Heart left ventricle (tissue), 16 donors: ENCODE measurements at regions of chr1 and their contacts with region 1.

Region 1: DNA sequence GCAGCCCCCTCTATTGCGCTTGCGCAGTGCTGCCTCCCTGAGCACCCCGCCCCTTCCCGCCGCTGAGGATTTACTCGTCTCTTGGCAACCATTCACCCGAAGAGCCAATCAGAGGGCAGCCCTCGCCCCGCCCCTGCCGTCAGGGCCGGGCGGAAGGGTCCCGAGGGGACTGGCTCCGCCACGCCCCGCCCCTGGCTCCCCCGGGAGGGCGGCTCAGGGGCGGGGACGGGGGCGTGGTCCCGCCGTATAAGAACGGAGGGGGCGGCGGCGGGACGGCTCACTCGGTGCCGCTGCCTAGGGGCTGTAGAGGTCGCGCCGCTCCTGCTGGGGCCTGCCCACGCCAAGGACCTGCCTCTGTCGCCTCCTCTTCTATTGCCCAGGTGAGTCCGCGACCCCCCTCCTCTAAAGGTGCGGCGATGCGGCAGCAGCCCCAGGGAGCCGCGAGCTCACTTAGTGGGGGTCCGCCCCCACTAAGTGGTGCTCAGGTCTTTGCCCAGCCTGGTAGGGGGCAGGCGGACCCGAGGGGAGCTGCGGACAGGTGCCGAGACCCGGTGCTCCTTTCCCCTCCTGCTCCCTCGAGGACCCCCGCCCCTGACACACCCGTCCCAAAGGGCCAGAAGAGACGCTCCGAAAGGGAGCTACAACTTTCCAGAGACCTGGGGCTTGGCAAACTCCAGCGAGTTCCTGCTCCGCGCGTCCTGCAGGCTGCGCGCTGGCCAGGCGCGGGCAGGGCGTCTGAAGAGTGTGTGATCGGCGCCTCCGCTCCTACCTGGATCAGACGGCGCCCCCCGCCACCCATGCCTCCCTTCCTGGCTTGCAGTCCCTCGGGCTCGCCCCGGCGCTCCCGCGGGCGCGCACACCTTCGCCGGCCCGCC is at the start of gene TENT5C:
- DNase-seq: peak; percentile 97 to 99 (median 98)
- ATAC-seq: peak; percentile 97 to 98 (median 98)
- H3K4me3 ChIP-seq: peak within 1 kb of the TSS; percentile 60 to 90 (median 78)
- H3K27ac ChIP-seq: peak within 1 kb of the TSS in 11 of 12 donors; percentile 75 to 86 (median 79)
- H3K4me1 ChIP-seq: peaks cover 0 to 47% (median 28%) of the 10 kb centered on the region in 12 donors
- H3K27me3 ChIP-seq: no peaks in the 10 kb centered on the region
- CTCF ChIP-seq: peak in 4 of 12 donors; percentile 3 to 15 (median 6)
- POLR2A ChIP-seq: peak; percentile 51 to 97
- total RNA-seq, gene TENT5C: 7.9 to 21.6 (median 15.1) TPM

Region 2: DNA sequence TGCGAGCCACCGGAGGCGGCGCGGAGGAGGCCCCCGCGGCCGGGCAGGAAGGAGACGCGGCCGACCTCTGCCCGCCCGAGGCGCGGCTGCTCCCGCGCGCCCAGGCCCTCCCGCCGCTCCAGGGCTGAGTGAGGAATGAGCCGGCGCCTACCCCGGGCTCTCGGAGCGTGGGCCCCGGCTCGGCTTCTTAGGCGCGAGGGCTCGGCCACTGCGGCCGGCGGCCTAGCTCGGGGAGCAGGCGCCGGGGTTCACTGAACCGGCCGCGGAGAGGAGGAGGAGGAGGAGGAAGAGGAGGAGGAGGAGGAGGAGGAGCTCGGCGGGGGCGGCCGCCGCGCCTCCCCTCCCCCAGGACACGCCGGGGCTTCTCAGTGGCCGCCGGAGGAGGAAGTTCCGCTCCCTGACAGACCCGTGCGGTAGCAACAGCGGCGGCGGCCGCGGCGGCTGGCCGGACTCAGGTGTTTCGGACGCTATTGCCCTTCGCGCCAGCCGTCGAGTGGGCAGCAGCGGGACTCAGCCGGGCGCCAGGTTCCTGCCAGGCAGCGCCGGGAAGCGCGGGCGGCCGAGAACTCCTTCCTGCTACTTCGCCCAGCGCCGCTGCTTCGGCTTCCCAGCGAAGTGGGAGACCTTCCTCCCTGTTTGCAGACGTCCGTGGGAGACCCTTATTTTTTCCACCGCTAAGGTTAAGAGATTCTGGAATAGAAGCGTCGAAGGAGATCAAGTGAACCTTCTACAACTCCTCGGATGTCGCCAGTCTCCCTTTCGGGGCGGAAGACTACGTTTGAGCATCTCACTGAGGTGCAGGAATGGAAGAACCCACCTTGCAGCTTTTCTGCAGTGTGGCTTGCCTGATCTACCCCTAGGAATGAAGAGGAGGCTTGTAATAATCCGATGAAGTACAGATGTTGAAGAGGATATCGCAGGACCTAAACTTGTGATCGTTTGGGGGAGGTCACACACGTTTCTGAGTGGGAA is 238.7 kb before region 1 on chr1 and contains the start of gene MAN1A2:
- intact Hi-C with region 1: loop called in 2 of 10 experiments (anchors 5 kb)
- DNase-seq: peak; percentile 92 to 95 (median 93)
- ATAC-seq: peak; percentile 92 to 97 (median 96)
- H3K4me3 ChIP-seq: peak within 1 kb of the TSS; percentile 73 to 94 (median 88)
- H3K27ac ChIP-seq: peak within 1 kb of the TSS; percentile 90 to 99 (median 99)
- H3K4me1 ChIP-seq: peaks cover 4 to 60% (median 36%) of the 10 kb centered on the region in 12 donors
- H3K27me3 ChIP-seq: no peaks in the 10 kb centered on the region
- CTCF ChIP-seq: no peak
- POLR2A ChIP-seq: peak in 1 of 2 donors; percentile 81
- total RNA-seq, gene MAN1A2: 15.8 to 36.5 (median 23.9) TPM

Region 3: DNA sequence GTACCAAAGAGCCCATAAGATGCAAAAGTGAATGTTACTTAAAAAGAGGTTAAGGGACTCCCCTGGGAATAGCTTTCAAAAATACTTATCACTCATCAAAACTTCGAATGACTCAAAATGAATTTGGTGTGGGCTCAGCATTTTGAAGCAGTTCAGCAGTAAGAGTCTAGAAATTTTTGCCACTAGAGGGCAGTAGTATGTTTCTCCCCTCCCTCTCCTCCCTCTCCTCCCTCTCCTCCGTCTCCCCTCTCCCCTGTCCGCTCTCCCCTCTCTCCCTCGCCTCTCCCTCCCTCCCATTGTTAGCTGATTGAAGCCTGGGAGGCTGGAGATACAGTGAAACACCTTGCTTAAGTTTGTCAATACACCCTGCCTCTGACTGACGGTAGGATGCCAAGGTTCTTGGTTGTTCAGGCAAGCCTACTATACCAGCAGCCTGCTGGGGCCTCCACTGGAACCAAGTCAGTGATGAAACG is 71.0 kb before region 1 on chr1:
- intact Hi-C with region 1: loop called in 3 of 10 experiments (anchors 5 to 10 kb)
- DNase-seq: peak in 2 of 5 donors; percentile 22 to 33
- ATAC-seq: peak; percentile 70 to 91 (median 88)
- H3K4me3 ChIP-seq: no peak overlapping the region
- H3K27ac ChIP-seq: no peak overlapping the region
- H3K4me1 ChIP-seq: no peaks in the 10 kb centered on the region
- H3K27me3 ChIP-seq: no peaks in the 10 kb centered on the region
- CTCF ChIP-seq: peak; percentile 49 to 74 (median 64)
- POLR2A ChIP-seq: no peak

Region 4: DNA sequence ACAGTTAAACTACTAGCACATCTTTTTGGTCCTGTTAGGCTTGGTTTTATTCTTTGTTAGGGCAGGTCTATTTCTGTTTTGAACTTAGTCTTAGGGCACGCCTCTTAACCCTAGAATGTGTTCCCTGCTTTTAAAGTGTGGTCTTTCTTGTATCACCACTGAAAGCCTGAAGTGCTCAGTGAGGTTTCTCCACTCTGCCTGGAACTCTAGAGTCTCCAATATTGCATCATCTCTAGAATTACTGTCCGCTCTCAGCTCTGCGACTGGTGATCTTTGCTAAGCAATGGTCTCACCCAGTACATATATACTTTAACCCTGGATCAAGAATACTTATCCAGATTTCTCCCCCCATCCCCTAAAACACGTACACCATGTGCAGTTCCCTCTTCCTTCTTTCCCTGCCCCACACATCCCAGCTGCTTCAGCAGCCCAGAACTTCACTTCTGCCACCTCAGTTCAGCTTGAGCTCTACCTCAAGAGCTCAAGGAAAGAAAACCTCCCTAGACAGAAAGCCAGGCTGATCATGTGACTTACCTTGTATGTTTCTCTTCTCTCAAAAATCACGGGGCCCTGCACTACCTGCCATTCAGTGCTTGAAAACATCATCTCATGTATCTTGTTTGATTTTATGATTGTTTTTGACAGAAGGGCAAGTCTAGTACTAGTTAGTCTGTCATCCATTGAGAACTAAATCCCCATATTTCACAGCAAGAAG is 59.7 kb after region 1 on chr1:
- intact Hi-C with region 1: loop called in 4 of 10 experiments (anchors 5 kb)
- DNase-seq: no peak
- ATAC-seq: no peak
- H3K4me3 ChIP-seq: no peak overlapping the region
- H3K27ac ChIP-seq: peak overlapping the region in 1 of 12 donors; percentile 19
- H3K4me1 ChIP-seq: peaks cover 0 to 15% (median 2%) of the 10 kb centered on the region in 12 donors
- H3K27me3 ChIP-seq: no peaks in the 10 kb centered on the region
- CTCF ChIP-seq: no peak
- POLR2A ChIP-seq: no peak

Region 5: GRCh38 chr1:117674521-117675397 is 68.7 kb after region 1 on chr1:
- intact Hi-C with region 1: loop called in 7 of 10 experiments (anchors 2 to 5 kb)
- DNase-seq: no peak
- ATAC-seq: no peak
- H3K4me3 ChIP-seq: no peak overlapping the region
- H3K27ac ChIP-seq: peak overlapping the region in 6 of 12 donors; percentile 63 to 90 (median 84)
- H3K4me1 ChIP-seq: peaks cover 4 to 79% (median 28%) of the 10 kb centered on the region in 12 donors
- H3K27me3 ChIP-seq: no peaks in the 10 kb centered on the region
- CTCF ChIP-seq: peak in 6 of 12 donors; percentile 16 to 35 (median 24)
- POLR2A ChIP-seq: no peak

Region 6: DNA sequence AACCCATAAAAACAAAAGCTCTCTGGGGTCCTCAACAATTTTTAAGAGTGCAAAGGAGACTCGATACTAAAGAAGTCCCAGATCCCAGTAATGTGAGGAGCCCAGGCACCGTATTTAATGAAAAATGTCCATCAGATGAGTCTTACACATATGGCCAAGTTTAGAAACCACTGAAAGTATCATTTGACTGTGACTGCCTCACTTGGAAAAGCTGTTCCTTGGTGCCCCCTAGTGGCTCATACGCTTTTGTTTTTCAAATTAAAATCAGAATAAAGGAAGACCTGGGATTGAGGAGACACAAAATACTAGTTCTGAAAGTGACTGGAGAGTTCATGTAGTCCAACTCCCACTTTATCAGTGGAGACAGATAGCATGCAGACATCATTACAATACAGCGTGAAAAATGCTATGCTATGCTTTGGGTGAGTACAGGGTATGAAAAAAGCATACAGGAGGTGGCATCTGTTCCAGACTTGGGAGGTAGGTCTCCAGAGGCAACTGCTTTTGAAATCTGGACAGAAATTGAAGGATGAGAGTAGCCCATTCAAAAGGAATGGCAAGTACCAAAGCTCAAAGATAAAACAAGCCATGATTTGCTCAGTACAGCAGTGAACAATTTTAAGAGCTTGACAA is 289.6 kb after region 1 on chr1:
- intact Hi-C with region 1: loop called in 1 of 10 experiments (anchors 10 kb)
- DNase-seq: peak in 3 of 5 donors; percentile 44 to 50 (median 48)
- ATAC-seq: peak in 2 of 4 donors; percentile 34 to 45
- H3K4me3 ChIP-seq: no peak overlapping the region
- H3K27ac ChIP-seq: no peak overlapping the region
- H3K4me1 ChIP-seq: peaks cover 0 to 4% (median 0%) of the 10 kb centered on the region in 12 donors
- H3K27me3 ChIP-seq: no peaks in the 10 kb centered on the region
- CTCF ChIP-seq: peak; percentile 56 to 83 (median 72)
- POLR2A ChIP-seq: no peak